ENCODE measurements at regions of chr11 and their contacts with region 1.

Region 1: DNA sequence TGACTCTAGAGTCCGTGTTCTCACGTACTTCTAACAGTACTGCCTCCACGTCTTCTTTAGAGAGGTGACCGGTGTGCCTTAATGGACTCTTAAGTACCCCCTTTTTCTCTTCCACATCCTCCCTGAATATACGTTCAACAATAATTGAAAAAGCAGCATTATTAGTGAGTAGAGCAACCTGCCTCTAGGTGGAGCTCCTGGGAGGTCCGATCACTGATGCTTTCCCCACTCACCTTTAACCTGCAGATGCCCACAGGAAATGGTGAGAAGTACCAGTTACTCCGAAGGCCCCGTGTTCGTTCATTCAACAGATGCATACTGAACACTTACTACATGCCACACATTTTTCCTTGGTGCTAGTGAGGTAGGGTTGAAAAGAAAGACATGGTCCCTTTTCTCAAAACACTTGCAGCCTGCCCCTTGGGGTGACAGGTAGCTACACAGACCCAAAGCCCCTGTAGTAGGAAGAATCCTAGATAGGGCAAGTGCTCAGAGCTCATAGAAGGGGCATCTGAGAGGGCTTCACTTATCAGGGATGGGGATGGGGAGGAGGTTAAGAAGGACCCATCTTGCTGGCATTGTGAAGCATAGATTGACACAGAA is 72.7 kb downstream of the FEZ1 start:
- DNase-seq: no peak
- ATAC-seq: peak; percentile 79
- H3K4me3 Mint-ChIP-seq: no peak overlapping the region
- H3K27ac Mint-ChIP-seq: no peak overlapping the region
- H3K4me1 Mint-ChIP-seq: peaks cover 21% of the 10 kb centered on the region
- H3K27me3 Mint-ChIP-seq: no peaks in the 10 kb centered on the region
- CTCF ChIP-seq: 0 out of 2 replicates have a peak, but pooled peaks have one; percentile 17

Region 2: GRCh38 chr11:125075849-125076317 is 347.5 kb before region 1 on chr11:
- CTCF ChIA-PET with region 1: interaction called, 10 read pairs
- POLR2A ChIA-PET with region 1: no interaction called
- DNase-seq: no peak
- ATAC-seq: peak; percentile 51
- H3K4me3 Mint-ChIP-seq: no peak overlapping the region
- H3K27ac Mint-ChIP-seq: no peak overlapping the region
- H3K4me1 Mint-ChIP-seq: peaks cover 6% of the 10 kb centered on the region
- H3K27me3 Mint-ChIP-seq: no peaks in the 10 kb centered on the region; the same call in 1 of the 2 replicates
- CTCF ChIP-seq: no peak

Region 3: GRCh38 chr11:125364121-125364826 is 59.1 kb before region 1 on chr11:
- CTCF ChIA-PET with region 1: interaction called, 10 read pairs
- POLR2A ChIA-PET with region 1: no interaction called
- DNase-seq: no peak
- ATAC-seq: peak; percentile 61
- H3K4me3 Mint-ChIP-seq: no peak overlapping the region
- H3K27ac Mint-ChIP-seq: no peak overlapping the region
- H3K4me1 Mint-ChIP-seq: peaks cover 14% of the 10 kb centered on the region
- H3K27me3 Mint-ChIP-seq: no peaks in the 10 kb centered on the region; the same call in 1 of the 2 replicates
- CTCF ChIP-seq: 0 out of 2 replicates have a peak, but pooled peaks have one; percentile 13

Region 4: DNA sequence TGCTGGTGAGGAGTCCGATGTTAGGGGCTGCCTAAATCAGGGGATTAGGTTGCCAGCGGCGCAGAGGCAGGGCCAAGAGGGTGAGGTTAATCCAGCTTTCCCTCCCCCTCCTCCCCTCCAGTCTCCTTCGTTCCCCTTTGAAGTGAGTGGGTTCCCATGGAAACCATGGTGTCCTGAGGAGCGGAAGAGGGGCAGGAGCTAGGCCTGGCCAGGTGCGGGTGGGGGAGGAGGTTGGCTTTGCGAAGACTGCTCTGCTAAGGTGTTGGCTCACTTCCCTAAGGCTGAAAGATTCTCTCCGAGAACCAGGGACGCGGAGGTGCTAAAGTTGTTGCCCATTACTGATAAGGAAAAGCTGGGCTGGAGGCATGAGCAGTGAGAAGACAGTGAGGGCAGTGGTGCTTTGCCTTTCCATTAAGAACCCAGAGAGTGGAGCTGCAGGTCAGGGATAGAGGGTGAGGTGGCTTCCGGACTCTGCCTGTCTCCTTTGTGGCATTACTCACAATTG is 51.9 kb before region 1 on chr11:
- CTCF ChIA-PET with region 1: interaction called, 35 read pairs
- POLR2A ChIA-PET with region 1: interaction called, 3 read pairs
- DNase-seq: peak; percentile 86
- ATAC-seq: peak; percentile 88
- H3K4me3 Mint-ChIP-seq: peak overlapping the region; percentile 64
- H3K27ac Mint-ChIP-seq: peak overlapping the region; percentile 97
- H3K4me1 Mint-ChIP-seq: peaks cover 58% of the 10 kb centered on the region
- H3K27me3 Mint-ChIP-seq: peaks cover 5% of the 10 kb centered on the region
- CTCF ChIP-seq: no peak

Region 5: GRCh38 chr11:125410091-125410490 is 13.3 kb before region 1 on chr11:
- CTCF ChIA-PET with region 1: interaction called, 45 read pairs
- POLR2A ChIA-PET with region 1: interaction called, 3 read pairs
- DNase-seq: peak; percentile 67
- ATAC-seq: peak; percentile 83
- H3K4me3 Mint-ChIP-seq: no peak overlapping the region
- H3K27ac Mint-ChIP-seq: no peak overlapping the region
- H3K4me1 Mint-ChIP-seq: peaks cover 21% of the 10 kb centered on the region
- H3K27me3 Mint-ChIP-seq: peaks cover 6% of the 10 kb centered on the region; the same call in 1 of the 2 replicates
- CTCF ChIP-seq: no peak

Region 6: DNA sequence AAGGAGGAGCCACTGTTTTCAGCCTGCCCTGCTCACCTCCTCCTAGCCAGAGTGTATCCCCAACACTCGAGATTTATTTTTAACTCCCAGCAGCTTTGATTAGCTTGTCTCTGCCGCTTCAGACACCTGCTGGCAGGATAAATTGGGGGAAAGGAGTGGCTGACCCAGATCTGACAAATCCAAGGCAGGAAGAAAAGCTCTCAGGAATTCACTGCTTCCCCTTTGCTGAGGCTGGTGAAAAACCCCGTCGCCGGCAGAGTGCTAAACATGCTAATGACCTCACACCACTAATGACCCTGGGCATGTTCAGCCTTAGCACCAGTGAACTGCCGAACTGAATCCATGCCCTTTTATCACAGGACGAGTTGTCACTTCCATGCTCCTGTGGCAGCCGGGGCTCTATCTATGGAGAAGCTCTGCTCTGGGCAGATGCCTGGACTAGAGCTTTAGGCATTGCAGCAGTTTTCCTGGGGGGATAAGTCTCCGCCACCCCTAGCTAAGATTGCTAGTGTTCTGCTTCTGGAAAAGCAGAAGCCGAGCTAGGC is 20.5 kb after region 1 on chr11:
- CTCF ChIA-PET with region 1: interaction called, 34 read pairs
- POLR2A ChIA-PET with region 1: no interaction called
- DNase-seq: peak; percentile 43
- ATAC-seq: peak; percentile 78
- H3K4me3 Mint-ChIP-seq: peak overlapping the region; percentile 53
- H3K27ac Mint-ChIP-seq: peak overlapping the region; percentile 99
- H3K4me1 Mint-ChIP-seq: peaks cover 46% of the 10 kb centered on the region
- H3K27me3 Mint-ChIP-seq: no peaks in the 10 kb centered on the region; the same call in 1 of the 2 replicates
- CTCF ChIP-seq: no peak